Heart right ventricle (tissue), 16 donors: ENCODE measurements at regions of chr6 and their contacts with region 1.

Region 1: GRCh38 chr6:47309291-47310130 is at the start of gene TNFRSF21:
- DNase-seq: peak; percentile 90 to 92
- ATAC-seq: peak; percentile 98 to 100 (median 99)
- H3K4me3 ChIP-seq: peak within 1 kb of the TSS; percentile 56 to 83 (median 78)
- H3K27ac ChIP-seq: peak within 1 kb of the TSS; percentile 22 to 81 (median 73)
- H3K4me1 ChIP-seq: peaks cover 0 to 25% (median 10%) of the 10 kb centered on the region in 9 donors
- H3K27me3 ChIP-seq: peaks cover 0 to 61% (median 40%) of the 10 kb centered on the region in 7 donors
- CTCF ChIP-seq: peak; percentile 83 to 99 (median 95)
- total RNA-seq, gene TNFRSF21: 3.8 to 12.8 (median 6.0) TPM

Region 2: DNA sequence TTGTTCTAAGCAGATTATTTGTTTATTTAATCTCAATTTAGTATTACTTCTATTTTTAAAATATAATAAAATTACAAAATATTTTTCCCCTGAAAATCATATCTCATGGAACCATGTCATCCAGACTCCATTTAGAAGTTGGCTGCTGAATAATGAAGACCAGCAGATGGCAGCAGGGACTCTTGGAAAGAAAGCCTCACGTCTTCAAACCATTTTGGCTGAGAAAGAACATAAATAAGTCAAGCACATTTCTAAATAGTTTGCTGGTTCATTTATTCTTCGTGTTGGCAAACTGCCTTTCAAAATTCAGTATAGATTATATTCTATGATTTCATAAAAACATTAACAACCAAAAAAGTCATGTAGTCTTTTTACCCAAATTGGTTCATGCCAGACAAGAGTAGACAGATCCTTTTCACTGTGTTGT is 889.9 kb before region 1 on chr6:
- intact Hi-C with region 1: loop called in 1 of 10 experiments (anchors 5 kb)
- DNase-seq: peak in 1 of 2 donors; percentile 76
- ATAC-seq: peak in 5 of 8 donors; percentile 42 to 67 (median 58)
- H3K4me3 ChIP-seq: no peak overlapping the region
- H3K27ac ChIP-seq: peak overlapping the region in 4 of 10 donors; percentile 4 to 59 (median 30)
- H3K4me1 ChIP-seq: peaks cover 0 to 46% (median 15%) of the 10 kb centered on the region in 9 donors
- H3K27me3 ChIP-seq: no peaks in the 10 kb centered on the region
- CTCF ChIP-seq: peak; percentile 53 to 93 (median 81)

Region 3: DNA sequence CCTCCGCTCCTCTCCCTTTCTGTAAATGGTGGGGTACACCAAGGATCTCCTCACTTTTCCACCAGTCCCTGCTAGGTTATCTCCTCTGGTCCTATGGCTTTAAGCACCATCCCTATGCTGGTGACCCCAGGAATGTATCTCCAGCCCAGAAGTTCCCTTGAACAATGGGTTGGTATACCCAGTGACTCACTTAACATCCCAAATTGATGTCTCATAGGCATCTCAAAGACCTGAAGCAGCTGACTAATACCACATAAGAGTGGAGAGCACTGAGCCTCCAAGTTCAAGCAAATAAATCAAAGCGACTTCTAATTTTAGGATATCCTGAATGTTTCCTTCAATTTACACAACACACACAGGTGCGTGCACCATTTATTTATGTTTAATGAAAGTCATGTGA is 315.7 kb before region 1 on chr6:
- intact Hi-C with region 1: loop called in 1 of 10 experiments (anchors 10 kb)
- DNase-seq: no peak
- ATAC-seq: no peak
- H3K4me3 ChIP-seq: no peak overlapping the region
- H3K27ac ChIP-seq: no peak overlapping the region
- H3K4me1 ChIP-seq: peaks cover 2 to 28% (median 20%) of the 10 kb centered on the region in 9 donors
- H3K27me3 ChIP-seq: peaks cover 0 to 7% (median 0%) of the 10 kb centered on the region in 7 donors
- CTCF ChIP-seq: no peak

Region 4: GRCh38 chr6:47097092-47097945 is 212.2 kb before region 1 on chr6:
- intact Hi-C with region 1: loop called (anchors 1 to 5 kb)
- DNase-seq: peak in 1 of 2 donors; percentile 75
- ATAC-seq: peak; percentile 79 to 94 (median 90)
- H3K4me3 ChIP-seq: no peak overlapping the region
- H3K27ac ChIP-seq: peak overlapping the region in 4 of 10 donors; percentile 7 to 32 (median 28)
- H3K4me1 ChIP-seq: peaks cover 0 to 39% (median 10%) of the 10 kb centered on the region in 9 donors
- H3K27me3 ChIP-seq: peaks cover 0 to 1% (median 0%) of the 10 kb centered on the region in 7 donors
- CTCF ChIP-seq: peak; percentile 52 to 81 (median 66)

Region 5: DNA sequence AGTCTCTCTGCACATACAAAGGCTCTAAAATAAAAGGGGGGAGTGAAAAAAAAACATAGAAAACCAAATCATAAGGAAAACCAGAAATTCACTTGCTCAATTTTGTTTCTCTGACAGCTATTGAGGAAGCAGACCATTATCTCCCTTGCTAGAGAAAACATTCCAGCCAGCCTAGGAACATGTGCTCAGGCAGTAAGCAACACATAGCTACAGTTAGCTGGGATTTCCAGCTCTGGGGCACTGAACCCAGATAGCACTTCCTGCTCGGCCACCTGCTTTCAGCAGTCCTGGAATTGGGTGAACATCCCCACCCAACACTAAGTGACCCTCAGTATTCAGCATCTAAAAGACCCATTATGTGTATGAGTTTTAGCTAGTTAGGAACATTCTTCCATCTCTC is 61.1 kb before region 1 on chr6:
- intact Hi-C with region 1: loop called in 5 of 10 experiments (anchors 2 to 10 kb)
- DNase-seq: no peak
- ATAC-seq: peak in 4 of 8 donors; percentile 23 to 55 (median 43)
- H3K4me3 ChIP-seq: no peak overlapping the region
- H3K27ac ChIP-seq: peak overlapping the region in 3 of 10 donors; percentile 30 to 57 (median 51)
- H3K4me1 ChIP-seq: peaks cover 0 to 46% (median 37%) of the 10 kb centered on the region in 9 donors
- H3K27me3 ChIP-seq: no peaks in the 10 kb centered on the region
- CTCF ChIP-seq: no peak